SK-N-SH (cell line): ENCODE measurements at regions of chr6 and their contacts with region 1.

Region 1: GRCh38 chr6:4775584-4776494 is at the start of gene CDYL:
- DNase-seq: peak; percentile 97
- H3K4me3 ChIP-seq: peak within 1 kb of the TSS; percentile 63 to 70
- H3K27ac ChIP-seq: peak within 1 kb of the TSS in 1 of 2 experiments; percentile 68; a peak in 2 of 4 replicates
- H3K4me1 ChIP-seq: peaks cover 4 to 8% of the 10 kb centered on the region in 2 experiments; a peak in 3 of 4 replicates
- H3K27me3 ChIP-seq: peaks cover 6% of the 10 kb centered on the region; the same call in 1 of the 2 replicates
- CTCF ChIP-seq: peak; percentile 29
- EP300 ChIP-seq: no peak
- RAD21 ChIP-seq: no peak
- polyA plus RNA-seq, gene CDYL: 13.3 and 14.3 TPM in 2 replicates

Region 2: GRCh38 chr6:4805553-4806336 is 29.9 kb after region 1 on chr6:
- CTCF ChIA-PET with region 1: interaction called, 10 read pairs
- POLR2A ChIA-PET with region 1: no interaction called
- DNase-seq: peak; percentile 68
- H3K4me3 ChIP-seq: no peak overlapping the region
- H3K27ac ChIP-seq: no peak overlapping the region
- H3K4me1 ChIP-seq: peaks cover 0 to 18% of the 10 kb centered on the region in 2 experiments; a peak in 3 of 4 replicates
- H3K27me3 ChIP-seq: no peaks in the 10 kb centered on the region
- CTCF ChIP-seq: peak; percentile 63
- EP300 ChIP-seq: no peak
- RAD21 ChIP-seq: peak; percentile 69